AG04449 (cell line): ENCODE measurements at regions of chr17 and their contacts with region 1.

Region 1: DNA sequence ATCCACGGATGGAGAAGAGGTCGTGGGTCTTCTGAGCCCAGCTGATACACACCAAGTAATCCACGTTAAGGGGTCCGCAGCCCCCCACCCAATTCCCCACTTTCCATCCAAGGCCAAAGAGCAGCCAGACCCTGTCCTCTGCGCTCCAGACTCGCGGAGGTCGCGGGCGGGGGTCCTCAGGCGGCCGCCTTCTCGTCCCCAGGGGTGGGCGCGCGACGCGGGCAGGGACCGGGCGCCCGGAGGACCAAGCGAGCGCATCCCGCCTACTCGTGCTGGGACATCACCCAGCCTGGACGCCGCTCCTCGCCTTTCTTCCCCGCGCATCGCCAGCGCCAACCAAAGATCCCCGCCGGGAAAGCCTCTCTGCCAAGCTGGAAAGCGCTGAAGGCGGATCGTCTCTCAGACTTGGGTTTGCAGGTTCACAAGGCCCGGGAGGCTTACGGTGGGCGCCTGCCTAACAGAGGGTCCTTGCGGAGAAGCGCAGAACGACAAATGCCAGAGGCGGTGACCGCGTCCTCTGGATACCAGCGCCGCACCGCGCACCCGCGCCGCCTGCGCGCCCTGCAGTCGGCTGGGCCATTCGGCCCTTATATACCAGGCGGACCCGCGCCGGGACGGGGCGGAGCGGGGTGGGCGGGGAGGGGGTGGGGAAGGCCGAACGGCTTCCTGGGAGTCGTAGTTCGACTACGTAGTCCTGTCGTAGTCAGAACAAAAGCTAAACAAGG is 471.6 kb downstream of the SOX9 start:
- DNase-seq: no peak
- H3K4me3 ChIP-seq: peak overlapping the region; percentile 96
- CTCF ChIP-seq: no peak

Region 2: DNA sequence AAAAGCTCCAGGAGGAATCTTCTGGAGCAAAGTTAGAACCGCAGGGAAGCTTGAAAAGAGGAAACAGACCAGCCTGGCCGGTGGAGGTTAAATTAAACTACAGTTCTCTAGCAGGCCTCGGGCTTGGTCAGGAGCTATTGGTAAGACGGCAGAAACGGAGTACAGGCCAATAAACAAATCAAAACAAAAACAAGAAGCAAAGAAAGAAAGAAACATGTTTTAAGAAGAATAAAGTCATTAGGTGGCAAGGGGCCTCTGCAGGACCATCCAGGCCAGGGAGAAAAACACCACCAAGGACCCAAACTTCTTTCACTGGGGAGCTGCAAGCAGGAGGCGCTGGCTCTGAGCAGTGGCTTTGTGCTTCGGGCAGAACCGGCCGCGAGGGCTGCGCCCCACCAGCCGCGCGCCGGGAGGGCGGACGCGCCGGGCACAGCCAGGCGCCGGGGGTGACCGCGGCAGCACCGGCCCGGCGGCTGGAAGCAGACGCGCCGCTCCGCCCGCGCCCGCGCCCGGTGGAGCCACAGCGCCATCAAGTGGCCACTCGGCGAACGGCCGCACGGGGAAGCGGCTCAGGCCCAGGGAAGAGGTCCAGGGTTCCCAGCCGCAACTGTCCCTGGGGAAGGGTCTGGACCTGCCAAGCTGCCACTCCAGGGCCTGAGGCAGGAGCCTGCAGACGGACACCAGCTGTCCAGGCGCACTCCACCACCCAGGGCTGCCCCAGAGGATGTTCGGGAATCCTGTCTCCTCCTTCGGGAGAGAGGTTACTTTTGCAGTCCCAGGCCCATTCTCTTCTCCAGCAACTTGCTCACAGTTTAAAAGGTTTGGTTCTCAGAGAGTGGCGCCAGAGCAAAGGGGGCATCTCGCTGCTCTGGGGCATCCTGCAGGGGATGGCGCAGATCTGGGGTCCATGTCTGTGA is 52.2 kb before region 1 on chr17:
- CTCF ChIA-PET with region 1: no interaction called
- POLR2A ChIA-PET with region 1: no interaction called
- DNase-seq: no peak
- H3K4me3 ChIP-seq: peak overlapping the region; percentile 40
- CTCF ChIP-seq: peak; percentile 90

Region 3: DNA sequence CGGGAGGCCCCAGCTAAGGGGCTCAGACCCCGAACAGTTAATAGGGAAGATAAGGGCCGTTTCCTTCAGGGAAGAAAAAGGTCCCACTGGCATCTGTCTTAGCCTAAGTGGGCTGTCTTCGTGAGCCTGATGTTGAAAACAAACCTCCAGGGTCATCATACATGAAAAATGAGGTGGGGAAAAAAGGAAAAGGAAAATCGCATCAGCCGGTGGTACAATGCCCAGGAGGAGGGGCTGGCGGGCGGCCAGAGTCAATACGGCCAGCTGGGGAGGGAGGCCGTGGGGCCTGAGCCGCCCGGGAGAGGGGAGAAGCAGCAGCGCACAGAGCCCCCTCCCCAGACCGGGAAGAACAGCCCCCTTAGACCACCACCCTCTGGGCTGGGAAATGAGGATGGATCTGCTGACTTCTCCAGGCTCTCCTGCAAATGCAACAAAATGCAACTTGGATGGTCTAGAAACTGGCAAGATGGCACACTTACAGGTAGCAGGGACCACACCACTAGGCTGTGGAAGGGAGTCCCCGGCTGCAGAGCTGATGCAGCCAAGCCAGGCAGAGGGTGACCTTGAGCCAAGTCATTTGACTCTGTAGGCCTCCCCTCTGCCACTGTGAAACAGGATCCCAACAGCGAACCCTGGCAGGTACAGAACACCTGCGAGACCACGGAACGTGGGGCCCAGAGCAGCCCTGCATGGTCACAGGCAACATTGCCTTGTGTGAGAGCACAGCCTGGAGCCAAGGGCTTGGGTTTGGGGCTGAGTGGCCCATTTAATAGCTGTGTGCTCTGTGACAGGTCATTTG is 23.1 kb before region 1 on chr17:
- CTCF ChIA-PET with region 1: no interaction called
- POLR2A ChIA-PET with region 1: no interaction called
- DNase-seq: no peak
- H3K4me3 ChIP-seq: no peak overlapping the region
- CTCF ChIP-seq: no peak

Region 4: DNA sequence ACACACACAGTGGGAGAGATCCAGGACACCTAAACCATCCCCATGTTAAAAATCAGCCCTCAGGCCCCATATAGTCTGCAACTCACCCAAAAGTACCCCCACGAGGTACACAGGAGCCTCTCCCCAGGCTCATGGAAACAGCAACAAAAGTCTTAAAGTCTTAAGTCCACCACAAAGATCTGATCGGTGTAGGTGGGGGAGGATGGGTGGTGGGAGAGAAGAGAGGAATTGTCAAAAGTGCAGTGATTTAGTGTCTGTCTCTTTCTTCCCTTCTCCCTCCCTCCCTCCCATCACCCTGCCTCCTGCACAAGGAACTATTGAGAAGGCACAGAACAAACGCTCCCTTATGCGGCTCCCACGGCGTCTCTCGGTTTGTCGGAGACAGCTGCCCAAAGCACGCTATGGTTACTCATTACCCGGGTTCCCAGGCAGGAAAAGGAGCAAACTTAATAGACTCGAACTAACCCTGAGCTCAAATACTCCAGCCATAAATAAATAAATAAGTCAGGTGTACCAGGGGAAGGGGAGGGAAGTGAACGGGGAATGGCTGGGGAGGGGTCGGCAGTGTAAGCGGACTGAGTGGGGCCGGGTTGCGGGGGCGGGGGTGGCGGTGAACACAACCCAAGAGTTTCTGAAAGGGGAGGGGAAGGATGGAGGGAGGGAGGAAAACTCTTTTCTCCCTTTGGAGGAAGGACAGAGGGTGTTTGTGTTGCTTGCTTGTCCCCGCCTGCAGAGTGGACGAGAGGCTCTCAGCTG is 22.6 kb after region 1 on chr17:
- CTCF ChIA-PET with region 1: no interaction called
- POLR2A ChIA-PET with region 1: interaction called, 15 read pairs
- DNase-seq: no peak
- H3K4me3 ChIP-seq: no peak overlapping the region
- CTCF ChIP-seq: no peak